ENCODE measurements at regions of chrX and their contacts with region 1.

Region 1: GRCh38 chrX:55135171-55135570 is 46.4 kb downstream of the PAGE2 start:
- DNase-seq: no peak

Region 2: DNA sequence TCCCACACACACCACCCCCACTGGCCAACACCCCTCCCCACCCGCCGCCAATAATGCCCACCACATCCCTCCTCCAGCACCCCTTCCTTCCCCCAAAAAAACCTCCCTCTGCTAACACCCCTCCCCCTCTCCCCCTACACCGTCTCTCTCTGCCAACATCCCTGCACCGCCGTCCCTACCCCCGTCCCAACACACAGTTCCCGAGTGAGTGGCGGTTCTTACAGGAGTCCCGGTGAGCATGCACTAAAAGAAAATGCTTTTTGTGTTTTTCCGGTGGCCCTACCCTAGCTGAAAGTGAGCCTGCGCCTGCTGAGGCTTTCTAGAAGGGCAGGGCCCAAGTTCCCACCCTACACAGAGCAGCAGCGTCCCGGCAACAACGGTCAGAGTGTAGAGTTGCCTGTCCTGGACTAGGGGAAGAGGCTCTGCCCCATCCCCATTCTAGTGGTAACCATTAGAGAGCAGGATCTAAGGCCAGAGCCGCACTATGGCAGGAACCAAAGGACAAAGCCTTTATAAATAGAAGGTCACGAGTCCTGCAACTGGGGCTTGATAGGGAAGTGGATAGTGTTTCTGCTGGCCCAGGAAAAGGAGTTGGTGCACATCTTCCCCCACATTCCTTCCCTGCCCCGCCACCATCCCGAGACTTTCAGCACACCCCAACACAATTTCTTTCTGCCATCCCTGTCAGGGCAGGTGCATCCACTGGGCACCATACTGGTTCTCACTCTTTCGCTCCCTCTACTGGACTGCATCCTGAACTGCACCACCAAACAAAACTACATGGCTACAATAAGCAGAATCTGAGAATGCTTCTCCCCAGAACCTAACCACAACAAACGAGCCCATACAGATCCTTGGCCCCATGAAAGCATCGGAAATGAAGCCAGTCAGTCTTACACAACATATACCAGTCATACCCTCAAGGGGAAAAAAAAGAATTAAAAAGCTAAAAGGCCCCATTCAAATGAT is 207.6 kb after region 1 on chrX:
- intact Hi-C with region 1: loop called (anchors 10 kb)
- DNase-seq: no peak